Adrenal gland (tissue), 19 donors: ENCODE measurements at regions of chr7 and their contacts with region 1.

Region 1: DNA sequence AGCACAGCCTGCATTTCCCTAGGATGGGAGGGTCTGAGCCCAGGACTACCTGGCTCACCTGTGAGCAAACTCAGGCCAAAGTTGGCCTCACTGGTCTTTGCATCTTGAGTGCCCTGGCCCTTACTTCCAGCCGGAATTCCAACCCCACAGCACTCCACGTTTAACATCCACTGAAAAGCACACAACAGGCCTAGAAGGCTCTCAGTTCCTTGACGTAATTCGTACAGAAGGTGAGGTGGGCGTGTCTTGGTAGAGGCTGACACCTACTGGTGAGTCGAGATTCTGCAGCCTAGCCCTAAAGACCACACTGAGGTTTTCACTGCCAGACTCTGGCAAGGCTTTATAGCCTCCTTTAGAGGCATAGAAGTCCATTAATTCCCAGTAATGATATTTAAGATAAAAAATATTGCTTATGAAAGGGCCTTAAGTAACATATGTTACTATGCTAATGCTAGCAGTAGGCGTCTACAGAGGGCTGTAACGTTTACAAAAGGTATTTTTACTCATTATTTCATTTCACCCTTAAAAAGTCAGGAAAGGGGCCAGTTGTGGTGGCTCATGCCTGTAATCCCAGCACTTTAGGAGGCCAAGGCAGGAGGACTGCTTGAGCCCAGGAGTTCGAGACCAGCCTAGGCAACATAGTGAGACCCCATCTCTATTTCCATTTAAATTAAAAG is 95.8 kb downstream of the HIP1 start:
- DNase-seq: peak; percentile 61 to 87 (median 71)
- H3K4me3 ChIP-seq: no peak overlapping the region
- H3K27ac ChIP-seq: no peak overlapping the region
- H3K4me1 ChIP-seq: peaks cover 6 to 13% of the 10 kb centered on the region in 2 donors
- H3K27me3 ChIP-seq: no peaks in the 10 kb centered on the region
- CTCF ChIP-seq: peak; percentile 65 to 91 (median 86)
- POLR2A ChIP-seq: no peak

Region 2: GRCh38 chr7:75534727-75535307 is 108.1 kb before region 1 on chr7:
- intact Hi-C with region 1: loop called in 1 of 2 experiments (anchors 10 kb)
- DNase-seq: peak in 1 of 7 donors; percentile 0
- H3K4me3 ChIP-seq: no peak overlapping the region
- H3K27ac ChIP-seq: no peak overlapping the region
- H3K4me1 ChIP-seq: no peaks in the 10 kb centered on the region
- H3K27me3 ChIP-seq: no peaks in the 10 kb centered on the region
- CTCF ChIP-seq: no peak
- POLR2A ChIP-seq: no peak

Region 3: GRCh38 chr7:76074954-76075335 is 432.0 kb after region 1 on chr7:
- intact Hi-C with region 1: no loop called
- DNase-seq: no peak
- H3K4me3 ChIP-seq: no peak overlapping the region
- H3K27ac ChIP-seq: no peak overlapping the region
- H3K4me1 ChIP-seq: peaks cover 0 to 4% of the 10 kb centered on the region in 2 donors
- H3K27me3 ChIP-seq: no peaks in the 10 kb centered on the region
- CTCF ChIP-seq: no peak
- POLR2A ChIP-seq: no peak